AG04449 (cell line): ENCODE measurements at regions of chr10 and their contacts with region 1.

Region 1: DNA sequence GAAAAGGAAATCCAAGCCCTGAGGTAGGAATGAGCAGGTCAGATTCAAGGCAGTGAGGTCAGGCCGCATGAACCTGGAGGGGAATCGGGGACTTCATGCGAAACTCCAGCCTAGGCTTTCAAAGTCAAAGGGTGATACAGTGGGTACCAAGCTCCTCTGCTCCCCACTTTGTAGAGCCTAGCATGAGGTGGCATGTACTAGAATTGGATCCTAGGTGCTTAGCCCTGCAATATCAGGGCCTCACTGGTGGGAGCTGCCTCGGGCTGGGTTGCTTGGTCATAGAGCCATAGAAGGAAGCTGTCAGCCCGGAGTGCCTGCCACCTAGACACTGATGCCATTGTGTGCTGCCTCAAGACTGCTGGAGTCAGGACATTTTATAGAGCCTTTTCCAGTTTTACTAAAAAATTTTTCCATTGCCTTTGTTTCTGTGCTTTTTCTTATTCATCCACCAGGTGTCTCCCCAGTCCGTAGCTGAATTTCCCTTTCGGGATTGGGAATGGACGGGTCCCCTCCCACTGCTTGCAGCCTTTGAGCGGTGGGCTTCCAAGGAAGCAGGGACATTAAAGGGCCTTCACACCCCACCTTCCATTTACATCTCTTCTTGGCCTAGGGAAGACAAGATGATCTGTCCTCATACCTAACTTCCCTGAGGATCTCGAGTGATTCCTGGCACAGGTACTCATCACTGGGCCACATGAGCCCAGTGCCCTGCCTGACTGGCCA is 5.5 kb upstream of the LZTS2 start:
- DNase-seq: no peak
- H3K4me3 ChIP-seq: no peak overlapping the region
- CTCF ChIP-seq: peak; percentile 53

Region 2: GRCh38 chr10:100923580-100923979 is 70.6 kb before region 1 on chr10:
- CTCF ChIA-PET with region 1: no interaction called
- POLR2A ChIA-PET with region 1: no interaction called
- DNase-seq: no peak
- H3K4me3 ChIP-seq: no peak overlapping the region
- CTCF ChIP-seq: no peak

Region 3: GRCh38 chr10:101005366-101005765 is 11.2 kb after region 1 on chr10:
- CTCF ChIA-PET with region 1: interaction called, 336 read pairs
- POLR2A ChIA-PET with region 1: interaction called, 6 read pairs
- DNase-seq: no peak
- H3K4me3 ChIP-seq: no peak overlapping the region
- CTCF ChIP-seq: no peak

Region 4: DNA sequence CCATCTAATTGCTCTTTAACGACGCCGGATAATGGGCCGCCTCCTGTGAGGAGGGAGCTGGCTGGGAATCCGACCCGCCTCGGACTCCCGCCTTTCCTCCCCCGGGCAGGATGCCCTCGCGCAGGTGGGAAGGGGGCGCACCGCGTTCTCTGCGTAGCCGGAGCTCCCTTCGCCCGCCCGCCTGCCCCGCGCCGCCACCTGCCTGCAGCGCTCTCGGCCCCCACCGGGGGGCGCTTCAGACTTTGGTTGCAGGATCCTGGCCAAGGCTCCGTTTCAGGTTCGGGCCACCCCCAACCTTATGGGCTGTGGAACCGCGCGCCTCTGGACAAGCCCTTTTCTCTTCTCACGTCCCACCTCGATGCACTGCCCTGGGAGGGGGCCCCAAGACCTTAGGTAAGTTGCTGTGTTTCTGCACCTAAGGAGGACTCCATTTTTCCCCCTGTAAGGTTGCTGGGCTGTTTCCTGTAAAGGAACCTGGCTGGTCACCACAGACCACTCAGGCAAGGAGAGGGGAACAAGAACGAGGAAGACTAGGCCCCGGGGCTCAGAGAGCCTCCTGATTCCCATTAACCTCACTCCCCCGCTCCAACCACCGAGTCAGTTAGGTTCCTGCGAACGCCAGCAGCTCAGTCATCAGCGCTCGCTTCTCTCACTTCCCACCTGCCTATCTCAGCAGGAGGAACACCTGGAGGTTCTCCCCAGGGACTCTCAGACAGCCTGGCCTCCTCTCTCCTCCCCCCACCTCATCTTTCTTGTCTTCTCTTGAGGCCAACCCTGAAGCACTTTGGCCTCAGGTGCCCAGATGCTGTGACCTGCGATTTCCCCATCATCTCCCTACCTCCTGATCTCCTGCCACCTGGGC is 56.3 kb after region 1 on chr10:
- CTCF ChIA-PET with region 1: interaction called, 14 read pairs
- POLR2A ChIA-PET with region 1: no interaction called
- DNase-seq: no peak
- H3K4me3 ChIP-seq: peak overlapping the region; percentile 40
- CTCF ChIP-seq: peak; percentile 83